ENCODE measurements at regions of chr16 and their contacts with region 1.

Region 1: GRCh38 chr16:4517812-4518680 is 20.5 kb downstream of the CDIP1 start:
- DNase-seq: peak in 1 of 2 experiments; percentile 45
- H3K4me3 ChIP-seq: no peak overlapping the region
- H3K27ac ChIP-seq: no peak overlapping the region
- H3K4me1 ChIP-seq: no peaks in the 10 kb centered on the region
- H3K27me3 ChIP-seq: no peaks in the 10 kb centered on the region
- CTCF ChIP-seq: peak; percentile 74

Region 2: GRCh38 chr16:4435337-4436067 is 82.5 kb before region 1 on chr16:
- CTCF ChIA-PET with region 1: no interaction called
- POLR2A ChIA-PET with region 1: no interaction called
- intact Hi-C with region 1: no loop called
- DNase-seq: no peak
- H3K4me3 ChIP-seq: no peak overlapping the region
- H3K27ac ChIP-seq: no peak overlapping the region
- H3K4me1 ChIP-seq: no peaks in the 10 kb centered on the region
- H3K27me3 ChIP-seq: no peaks in the 10 kb centered on the region
- CTCF ChIP-seq: no peak

Region 3: GRCh38 chr16:4500272-4500671 is 17.8 kb before region 1 on chr16:
- CTCF ChIA-PET with region 1: no interaction called
- POLR2A ChIA-PET with region 1: no interaction called
- intact Hi-C with region 1: no loop called
- DNase-seq: peak; percentile 56 to 83
- H3K4me3 ChIP-seq: no peak overlapping the region
- H3K27ac ChIP-seq: peak overlapping the region; percentile 67
- H3K4me1 ChIP-seq: peaks cover 58% of the 10 kb centered on the region
- H3K27me3 ChIP-seq: no peaks in the 10 kb centered on the region
- CTCF ChIP-seq: no peak

Region 4: GRCh38 chr16:4544473-4544872 is 26.4 kb after region 1 on chr16:
- CTCF ChIA-PET with region 1: interaction called, 4 read pairs
- POLR2A ChIA-PET with region 1: interaction called, 11 read pairs
- intact Hi-C with region 1: no loop called
- DNase-seq: no peak
- H3K4me3 ChIP-seq: no peak overlapping the region
- H3K27ac ChIP-seq: no peak overlapping the region
- H3K4me1 ChIP-seq: no peaks in the 10 kb centered on the region
- H3K27me3 ChIP-seq: no peaks in the 10 kb centered on the region
- CTCF ChIP-seq: no peak